ENCODE measurements at regions of chr2 and their contacts with region 1.

Region 1: GRCh38 chr2:165874445-165875039 is 79.0 kb downstream of the TTC21B start:
- DNase-seq: peak in 7 of 9 donors; percentile 29 to 70 (median 58)
- ATAC-seq: peak; percentile 91
- H3K4me3 ChIP-seq: no peak overlapping the region
- H3K4me3 Mint-ChIP-seq: peak overlapping the region in 6 of 10 donors; percentile 26 to 51 (median 36)
- H3K27ac ChIP-seq: no peak overlapping the region
- H3K27ac Mint-ChIP-seq: peak overlapping the region in 8 of 9 donors; percentile 41 to 88 (median 77)
- H3K4me1 ChIP-seq: peaks cover 0 to 7% of the 10 kb centered on the region in 2 donors
- H3K4me1 Mint-ChIP-seq: peaks cover 0 to 29% (median 27%) of the 10 kb centered on the region in 7 donors
- H3K27me3 ChIP-seq: no peaks in the 10 kb centered on the region
- H3K27me3 Mint-ChIP-seq: no peaks in the 10 kb centered on the region

Region 2: GRCh38 chr2:165015052-165015642 is 859.4 kb before region 1 on chr2:
- CTCF ChIA-PET with region 1: interaction called, 6 read pairs
- POLR2A ChIA-PET with region 1: no interaction called
- intact Hi-C with region 1: loop called (anchors 1 kb)
- DNase-seq: peak in 7 of 9 donors; percentile 21 to 44 (median 31)
- ATAC-seq: peak; percentile 59
- H3K4me3 ChIP-seq: no peak overlapping the region
- H3K4me3 Mint-ChIP-seq: no peak overlapping the region
- H3K27ac ChIP-seq: no peak overlapping the region
- H3K27ac Mint-ChIP-seq: no peak overlapping the region
- H3K4me1 ChIP-seq: no peaks in the 10 kb centered on the region
- H3K4me1 Mint-ChIP-seq: peaks cover 0 to 2% (median 0%) of the 10 kb centered on the region in 7 donors
- H3K27me3 ChIP-seq: no peaks in the 10 kb centered on the region
- H3K27me3 Mint-ChIP-seq: peaks cover 0 to 24% (median 9%) of the 10 kb centered on the region in 5 donors

Region 3: GRCh38 chr2:165293440-165294353 is 580.8 kb before region 1 on chr2:
- CTCF ChIA-PET with region 1: interaction called, 3 read pairs
- POLR2A ChIA-PET with region 1: no interaction called
- intact Hi-C with region 1: loop called (anchors 2 to 5 kb)
- DNase-seq: peak in 7 of 9 donors; percentile 78 to 89 (median 86)
- ATAC-seq: peak; percentile 100
- H3K4me3 ChIP-seq: no peak overlapping the region
- H3K4me3 Mint-ChIP-seq: peak overlapping the region in 6 of 10 donors; percentile 6 to 50 (median 24)
- H3K27ac ChIP-seq: no peak overlapping the region
- H3K27ac Mint-ChIP-seq: peak overlapping the region in 2 of 9 donors; percentile 12 to 50
- H3K4me1 ChIP-seq: no peaks in the 10 kb centered on the region
- H3K4me1 Mint-ChIP-seq: peaks cover 0 to 13% (median 6%) of the 10 kb centered on the region in 7 donors
- H3K27me3 ChIP-seq: no peaks in the 10 kb centered on the region
- H3K27me3 Mint-ChIP-seq: peaks cover 6 to 18% (median 8%) of the 10 kb centered on the region in 5 donors

Region 4: DNA sequence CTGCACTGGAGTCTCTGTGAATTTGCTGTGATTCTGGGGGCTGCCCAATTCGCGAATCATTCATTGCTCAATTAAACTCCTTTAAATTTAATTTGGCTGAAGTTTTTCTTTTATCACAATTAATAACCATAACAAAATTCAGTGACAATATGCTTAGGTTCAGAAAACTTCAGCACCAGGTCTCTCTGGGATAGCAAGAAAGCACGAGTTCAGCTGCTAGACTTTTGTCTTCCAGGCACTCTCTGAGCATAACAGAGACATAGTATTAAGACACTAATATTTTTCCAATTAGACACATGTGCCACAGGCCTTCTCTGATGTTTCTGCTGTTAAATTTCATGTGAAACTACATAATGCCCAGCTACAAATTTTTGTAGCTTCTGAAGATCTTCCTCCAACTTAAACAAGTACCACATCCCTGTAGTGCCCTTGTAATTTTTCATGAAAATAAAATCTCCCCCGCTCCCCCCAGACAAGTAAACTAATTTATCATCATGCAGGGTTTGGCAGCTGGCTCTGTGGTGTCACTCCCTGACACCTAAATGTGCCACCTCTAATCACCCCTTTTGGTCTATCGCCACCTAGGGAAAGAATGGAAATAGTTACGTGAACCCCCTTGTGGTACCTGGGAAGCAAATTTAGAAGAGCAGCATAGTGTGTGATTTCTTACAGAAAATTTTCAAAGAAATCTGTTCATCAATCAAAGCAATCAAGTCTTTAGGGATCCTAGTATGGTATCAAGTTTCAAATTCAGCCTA is 310.9 kb before region 1 on chr2:
- CTCF ChIA-PET with region 1: no interaction called
- POLR2A ChIA-PET with region 1: no interaction called
- intact Hi-C with region 1: loop called in 1 of 2 experiments (anchors 5 kb)
- DNase-seq: no peak
- ATAC-seq: no peak
- H3K4me3 ChIP-seq: no peak overlapping the region
- H3K4me3 Mint-ChIP-seq: no peak overlapping the region
- H3K27ac ChIP-seq: no peak overlapping the region
- H3K27ac Mint-ChIP-seq: no peak overlapping the region
- H3K4me1 ChIP-seq: no peaks in the 10 kb centered on the region
- H3K4me1 Mint-ChIP-seq: no peaks in the 10 kb centered on the region
- H3K27me3 ChIP-seq: no peaks in the 10 kb centered on the region
- H3K27me3 Mint-ChIP-seq: peaks cover 4 to 10% (median 10%) of the 10 kb centered on the region in 5 donors

Region 5: GRCh38 chr2:165794536-165794928 is 80.0 kb before region 1 on chr2:
- CTCF ChIA-PET with region 1: no interaction called
- POLR2A ChIA-PET with region 1: no interaction called
- intact Hi-C with region 1: loop called in 1 of 2 experiments (anchors 1 kb)
- DNase-seq: peak in 6 of 9 donors; percentile 25 to 65 (median 32)
- ATAC-seq: peak; percentile 91
- H3K4me3 ChIP-seq: peak overlapping the region; percentile 58
- H3K4me3 Mint-ChIP-seq: peak overlapping the region; percentile 85 to 97 (median 88)
- H3K27ac ChIP-seq: no peak overlapping the region
- H3K27ac Mint-ChIP-seq: peak overlapping the region in 5 of 9 donors; percentile 21 to 97 (median 44)
- H3K4me1 ChIP-seq: peaks cover 0 to 6% of the 10 kb centered on the region in 2 donors
- H3K4me1 Mint-ChIP-seq: peaks cover 14 to 42% (median 20%) of the 10 kb centered on the region in 7 donors
- H3K27me3 ChIP-seq: peaks cover 0 to 7% of the 10 kb centered on the region in 2 donors
- H3K27me3 Mint-ChIP-seq: peaks cover 12 to 46% (median 37%) of the 10 kb centered on the region in 5 donors

Measured in naive thymus-derived CD4-positive, alpha-beta T cell (primary cell).